Right lobe of liver (tissue), 6 donors: ENCODE measurements at regions of chrX and their contacts with region 1.

Region 1: DNA sequence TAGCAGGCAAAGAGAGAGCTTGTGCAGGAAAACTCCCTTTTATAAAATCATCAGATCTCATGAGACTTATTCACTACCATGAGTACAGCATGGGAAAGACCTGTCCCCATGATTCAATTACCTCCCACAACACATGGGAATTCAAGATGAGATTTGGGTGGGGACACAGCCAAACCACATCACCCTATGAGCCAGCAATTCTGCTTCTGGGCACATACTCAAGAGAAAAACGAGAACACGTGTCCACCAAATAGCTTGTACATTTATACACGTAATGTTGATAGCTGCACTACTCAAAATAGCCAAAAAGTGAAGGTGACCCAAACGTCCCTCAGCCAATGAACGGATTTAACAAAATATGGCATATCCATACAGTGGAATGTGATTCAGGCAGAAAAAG is 94.5 kb upstream of the DHRSX start:
- DNase-seq: no peak
- ATAC-seq: no peak
- H3K4me3 ChIP-seq: no peak overlapping the region
- H3K27ac ChIP-seq: no peak overlapping the region
- H3K4me1 ChIP-seq: no peaks in the 10 kb centered on the region
- H3K27me3 ChIP-seq: no peaks in the 10 kb centered on the region
- CTCF ChIP-seq: no peak
- POLR2A ChIP-seq: no peak

Region 2: DNA sequence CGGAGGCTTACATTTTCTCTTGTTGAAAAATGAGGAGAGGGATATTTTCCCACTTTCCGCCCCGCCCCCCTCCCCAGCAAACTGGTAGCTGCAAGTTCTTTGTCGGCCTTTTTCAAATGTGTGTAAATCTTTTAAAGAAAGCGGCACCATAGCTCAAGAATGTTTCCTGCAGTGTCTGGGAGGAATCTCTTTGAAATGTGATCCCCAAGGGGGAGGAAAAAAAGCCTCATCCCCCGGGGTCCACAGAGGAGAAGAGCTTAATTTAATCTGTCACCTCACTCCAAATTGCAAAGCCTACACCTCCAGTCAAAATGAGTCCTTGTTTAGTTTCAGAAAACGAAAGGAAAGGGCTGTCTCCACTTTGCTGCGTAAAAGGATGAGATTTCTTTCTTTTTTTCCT is 945.6 kb before region 1 on chrX:
- intact Hi-C with region 1: loop called in 1 of 2 experiments (anchors 10 kb)
- DNase-seq: no peak
- ATAC-seq: no peak
- H3K4me3 ChIP-seq: no peak overlapping the region
- H3K27ac ChIP-seq: no peak overlapping the region
- H3K4me1 ChIP-seq: no peaks in the 10 kb centered on the region
- H3K27me3 ChIP-seq: no peaks in the 10 kb centered on the region
- CTCF ChIP-seq: no peak
- POLR2A ChIP-seq: no peak

Region 3: DNA sequence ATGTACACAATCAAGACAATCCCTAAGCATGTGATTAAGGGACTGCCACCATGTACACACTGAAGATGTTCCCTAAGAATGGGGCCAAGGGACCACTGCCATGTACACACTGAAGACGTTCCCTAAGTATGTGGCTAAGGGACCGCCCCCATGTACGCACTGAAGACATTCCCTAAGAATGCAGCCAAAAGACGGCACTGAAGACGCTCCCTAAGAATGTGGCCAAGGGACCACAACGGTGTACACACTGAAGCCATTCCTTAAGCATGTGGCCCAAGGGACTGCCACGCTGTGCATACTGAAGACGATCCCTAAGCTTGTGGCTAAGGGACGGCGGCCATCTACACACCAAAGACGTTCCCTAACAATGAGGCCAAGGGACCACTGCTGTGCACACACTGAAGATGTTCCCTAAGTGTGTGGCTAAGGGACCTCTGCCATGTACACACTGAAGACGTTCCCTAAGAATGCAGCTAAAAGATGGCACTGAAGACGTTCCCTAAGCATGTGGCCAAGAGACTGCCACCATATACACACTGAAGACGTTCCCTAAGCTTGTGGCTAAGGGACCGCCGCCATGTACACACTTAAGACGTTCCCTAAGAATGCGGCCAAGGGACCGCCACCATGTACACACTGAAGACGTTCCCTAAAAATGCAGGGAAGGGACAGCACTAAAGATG is 120.8 kb before region 1 on chrX:
- intact Hi-C with region 1: no loop called
- DNase-seq: peak in 1 of 3 donors; percentile 36
- ATAC-seq: no peak
- H3K4me3 ChIP-seq: no peak overlapping the region
- H3K27ac ChIP-seq: no peak overlapping the region
- H3K4me1 ChIP-seq: peaks cover 0 to 12% (median 0%) of the 10 kb centered on the region in 4 donors
- H3K27me3 ChIP-seq: no peaks in the 10 kb centered on the region
- CTCF ChIP-seq: no peak
- POLR2A ChIP-seq: no peak